ENCODE measurements at regions of chr12 and their contacts with region 1.

Region 1: DNA sequence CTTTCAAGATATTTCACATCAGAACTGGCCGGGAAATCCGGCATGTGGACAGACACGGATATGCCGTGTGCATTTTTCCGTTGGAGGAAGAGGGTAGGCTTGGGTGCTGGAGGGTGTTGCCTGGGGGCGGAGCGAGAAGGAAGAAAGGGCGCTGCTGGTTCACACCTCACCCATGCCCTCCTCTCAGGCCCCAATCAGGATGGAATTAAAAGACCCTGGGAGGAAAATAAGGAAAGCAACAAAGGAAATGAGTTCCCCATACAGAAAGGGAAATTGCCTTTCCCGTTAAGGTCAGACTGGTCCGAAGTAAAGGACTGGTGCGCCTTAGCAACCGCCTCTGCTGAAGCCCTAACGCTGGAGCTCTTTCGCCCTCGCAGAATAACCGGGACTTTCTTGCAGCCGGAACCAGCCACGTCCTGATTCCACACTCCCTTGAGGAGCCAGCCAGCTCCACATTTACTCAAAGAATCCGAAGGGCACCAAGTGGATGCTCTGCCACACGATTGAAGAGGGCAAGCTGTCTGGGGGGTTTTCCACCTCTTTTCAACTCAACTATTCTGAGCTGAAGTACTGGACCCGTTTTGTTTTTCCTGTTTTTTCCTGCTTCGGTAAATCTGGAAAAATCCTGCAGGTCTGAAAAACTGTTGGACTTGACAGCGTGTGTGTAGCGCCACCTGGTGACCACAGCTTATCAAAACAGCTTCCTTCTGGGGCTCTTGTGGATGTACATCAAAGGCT is 37.7 kb upstream of the BCL2L14 start:
- DNase-seq: peak; percentile 34
- ATAC-seq: peak; percentile 72
- H3K4me3 Mint-ChIP-seq: peak overlapping the region; percentile 78
- H3K27ac Mint-ChIP-seq: peak overlapping the region; percentile 41
- H3K4me1 Mint-ChIP-seq: peaks cover 16% of the 10 kb centered on the region
- H3K27me3 Mint-ChIP-seq: peaks cover 5% of the 10 kb centered on the region
- CTCF ChIP-seq: peak; percentile 70

Region 2: DNA sequence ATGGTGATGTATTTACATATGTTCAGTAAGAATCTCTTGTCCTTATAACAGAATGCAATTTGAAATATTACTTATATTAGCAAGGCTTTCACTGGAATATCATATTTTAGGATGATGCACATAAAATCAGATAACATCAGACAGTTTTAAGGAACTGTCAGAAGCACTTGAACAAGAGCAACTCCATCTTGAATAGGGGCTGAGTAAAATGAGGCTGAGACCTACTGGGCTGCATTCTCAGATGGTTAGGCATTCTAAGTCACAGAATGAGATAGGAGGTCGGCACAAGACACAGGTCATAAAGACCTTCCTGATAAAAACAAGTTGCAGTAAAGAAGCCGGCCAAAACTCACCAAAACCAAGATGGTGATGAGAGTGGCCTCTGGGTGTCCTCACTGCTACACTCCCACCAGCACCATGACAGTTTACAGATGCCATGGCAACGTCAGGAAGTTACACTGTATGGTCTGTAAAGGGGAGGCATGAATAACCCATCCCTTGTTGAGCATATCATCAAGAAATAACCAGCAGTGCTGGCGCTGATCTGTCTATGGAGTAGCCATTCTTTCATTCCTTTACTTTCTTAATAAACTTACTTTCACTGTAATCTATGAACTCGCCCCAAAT is 411.1 kb before region 1 on chr12:
- CTCF ChIA-PET with region 1: interaction called, 33 read pairs
- POLR2A ChIA-PET with region 1: interaction called, 3 read pairs
- intact Hi-C with region 1: loop called (anchors 1 kb)
- DNase-seq: no peak
- ATAC-seq: peak; percentile 47
- H3K4me3 Mint-ChIP-seq: no peak overlapping the region
- H3K27ac Mint-ChIP-seq: peak overlapping the region; percentile 6
- H3K4me1 Mint-ChIP-seq: peaks cover 11% of the 10 kb centered on the region
- H3K27me3 Mint-ChIP-seq: no peaks in the 10 kb centered on the region
- CTCF ChIP-seq: no peak

Region 3: GRCh38 chr12:11746024-11746771 is 286.8 kb before region 1 on chr12:
- CTCF ChIA-PET with region 1: interaction called, 12 read pairs
- POLR2A ChIA-PET with region 1: no interaction called
- intact Hi-C with region 1: no loop called
- DNase-seq: no peak
- ATAC-seq: peak; percentile 73
- H3K4me3 Mint-ChIP-seq: peak overlapping the region; percentile 67
- H3K27ac Mint-ChIP-seq: peak overlapping the region; percentile 93
- H3K4me1 Mint-ChIP-seq: peaks cover 97% of the 10 kb centered on the region
- H3K27me3 Mint-ChIP-seq: no peaks in the 10 kb centered on the region
- CTCF ChIP-seq: no peak

Region 4: GRCh38 chr12:11812586-11813427 is 220.2 kb before region 1 on chr12:
- CTCF ChIA-PET with region 1: interaction called, 15 read pairs
- POLR2A ChIA-PET with region 1: interaction called, 7 read pairs
- intact Hi-C with region 1: loop called (anchors 5 kb)
- DNase-seq: peak; percentile 32
- ATAC-seq: peak; percentile 83
- H3K4me3 Mint-ChIP-seq: peak overlapping the region; percentile 65
- H3K27ac Mint-ChIP-seq: peak overlapping the region; percentile 87
- H3K4me1 Mint-ChIP-seq: peaks cover 66% of the 10 kb centered on the region
- H3K27me3 Mint-ChIP-seq: no peaks in the 10 kb centered on the region
- CTCF ChIP-seq: no peak

Region 5: GRCh38 chr12:12327802-12328201 is 294.8 kb after region 1 on chr12:
- CTCF ChIA-PET with region 1: interaction called, 8 read pairs
- POLR2A ChIA-PET with region 1: no interaction called
- intact Hi-C with region 1: loop called (anchors 2 kb)
- DNase-seq: no peak
- ATAC-seq: peak; percentile 31
- H3K4me3 Mint-ChIP-seq: no peak overlapping the region
- H3K27ac Mint-ChIP-seq: no peak overlapping the region
- H3K4me1 Mint-ChIP-seq: peaks cover 2% of the 10 kb centered on the region
- H3K27me3 Mint-ChIP-seq: peaks cover 2% of the 10 kb centered on the region
- CTCF ChIP-seq: no peak

Measured in activated B cell treated with CpG ODN at 0.5 μM for 24 hours (primary cell).